Ovary (tissue), 10 donors: ENCODE measurements at regions of chr1 and their contacts with region 1.

Region 1: GRCh38 chr1:156926175-156926574 is 5.7 kb downstream of the LRRC71 start:
- DNase-seq: no peak
- H3K4me3 ChIP-seq: no peak overlapping the region
- H3K27ac ChIP-seq: no peak overlapping the region
- H3K4me1 ChIP-seq: peaks cover 8% of the 10 kb centered on the region
- H3K27me3 ChIP-seq: no peaks in the 10 kb centered on the region
- CTCF ChIP-seq: no peak
- EP300 ChIP-seq: no peak
- POLR2A ChIP-seq: no peak

Region 2: GRCh38 chr1:156896490-156897033 is 29.6 kb before region 1 on chr1:
- intact Hi-C with region 1: loop called in 1 of 4 experiments (anchors 1 kb)
- DNase-seq: peak; percentile 47 to 65 (median 53)
- H3K4me3 ChIP-seq: no peak overlapping the region
- H3K27ac ChIP-seq: peak overlapping the region in 1 of 2 donors; percentile 19
- H3K4me1 ChIP-seq: peaks cover 25% of the 10 kb centered on the region
- H3K27me3 ChIP-seq: no peaks in the 10 kb centered on the region
- CTCF ChIP-seq: no peak
- EP300 ChIP-seq: no peak
- POLR2A ChIP-seq: no peak

Region 3: DNA sequence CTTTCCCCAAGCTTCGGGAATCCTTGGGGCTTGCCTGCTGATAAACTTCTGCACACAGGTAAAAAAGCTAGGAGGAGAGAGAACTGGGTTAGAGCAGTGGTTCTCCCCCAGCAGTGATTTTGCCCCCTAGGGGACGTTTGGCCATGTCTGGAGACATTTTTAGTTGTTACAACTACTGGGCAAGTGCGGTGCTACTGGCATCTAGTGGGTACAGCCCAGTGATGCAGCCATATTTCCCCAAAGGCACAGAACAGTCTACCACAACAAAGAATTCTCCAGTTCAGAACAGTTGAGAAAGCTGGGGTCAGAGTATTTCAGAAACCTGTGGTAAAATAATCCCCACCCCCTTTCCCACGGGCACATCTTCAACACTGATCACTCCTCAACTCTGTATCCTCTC is 35.5 kb after region 1 on chr1:
- intact Hi-C with region 1: no loop called
- DNase-seq: no peak
- H3K4me3 ChIP-seq: no peak overlapping the region
- H3K27ac ChIP-seq: no peak overlapping the region
- H3K4me1 ChIP-seq: no peaks in the 10 kb centered on the region
- H3K27me3 ChIP-seq: no peaks in the 10 kb centered on the region
- CTCF ChIP-seq: no peak
- EP300 ChIP-seq: no peak
- POLR2A ChIP-seq: no peak

Region 4: GRCh38 chr1:156993446-156994147 is 67.4 kb after region 1 on chr1:
- intact Hi-C with region 1: no loop called
- DNase-seq: no peak
- H3K4me3 ChIP-seq: no peak overlapping the region
- H3K27ac ChIP-seq: no peak overlapping the region
- H3K4me1 ChIP-seq: no peaks in the 10 kb centered on the region
- H3K27me3 ChIP-seq: no peaks in the 10 kb centered on the region
- CTCF ChIP-seq: no peak
- EP300 ChIP-seq: no peak
- POLR2A ChIP-seq: no peak